GM10248 (cell line): ENCODE measurements at regions of chr4 and their contacts with region 1.

Region 1: DNA sequence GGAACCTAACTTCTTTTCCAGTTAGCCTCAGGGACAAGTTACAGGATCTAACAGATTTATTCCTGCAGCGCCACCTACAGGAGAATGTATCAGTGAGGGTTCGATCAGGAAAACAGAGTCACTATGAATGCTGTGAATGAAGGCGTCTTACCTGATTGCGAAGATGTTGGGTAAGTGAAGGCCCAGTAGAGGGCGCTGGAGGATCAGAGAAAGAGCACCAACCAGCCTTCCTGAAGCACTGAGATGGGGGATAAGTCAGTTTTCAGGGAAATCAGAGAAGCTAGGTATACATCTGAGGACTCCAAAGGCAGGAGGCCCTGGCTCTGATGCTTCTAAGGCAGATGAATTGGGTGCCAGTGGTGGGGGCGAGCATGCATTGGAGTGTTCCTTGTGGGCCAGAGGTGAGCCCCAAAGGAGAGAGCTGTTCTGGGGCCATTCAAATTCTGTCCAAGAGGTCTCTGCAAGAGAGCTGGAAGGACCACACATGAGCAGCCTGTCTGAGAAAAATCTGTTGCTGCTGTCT is 169.9 kb upstream of the AADAT start:
- DNase-seq: peak; percentile 58
- CTCF ChIP-seq: peak; percentile 83

Region 2: DNA sequence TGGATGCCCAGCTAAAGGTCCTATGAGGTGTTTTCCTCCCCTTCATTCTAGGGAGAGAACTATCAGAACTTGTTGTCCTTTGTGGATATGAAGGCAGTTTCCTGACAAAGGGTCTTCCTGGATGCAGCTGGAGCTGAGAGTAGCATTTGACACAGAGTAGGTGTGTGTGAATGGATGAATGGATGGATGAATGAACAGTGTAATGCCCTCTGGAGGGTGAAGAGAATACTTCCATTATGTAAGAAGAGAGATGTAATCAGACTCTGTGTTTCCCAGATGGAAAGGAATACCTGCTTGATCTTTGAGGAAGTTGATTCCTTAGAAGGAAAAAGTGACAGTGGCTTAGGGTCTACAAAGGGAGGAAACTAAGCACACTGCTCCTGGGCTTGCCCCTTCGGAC is 114.6 kb before region 1 on chr4:
- CTCF ChIA-PET with region 1: interaction called, 10 read pairs
- POLR2A ChIA-PET with region 1: no interaction called
- DNase-seq: no peak
- CTCF ChIP-seq: no peak

Region 3: GRCh38 chr4:170242471-170242870 is 17.2 kb before region 1 on chr4:
- CTCF ChIA-PET with region 1: interaction called, 78 read pairs
- POLR2A ChIA-PET with region 1: no interaction called
- DNase-seq: no peak
- CTCF ChIP-seq: no peak

Region 4: DNA sequence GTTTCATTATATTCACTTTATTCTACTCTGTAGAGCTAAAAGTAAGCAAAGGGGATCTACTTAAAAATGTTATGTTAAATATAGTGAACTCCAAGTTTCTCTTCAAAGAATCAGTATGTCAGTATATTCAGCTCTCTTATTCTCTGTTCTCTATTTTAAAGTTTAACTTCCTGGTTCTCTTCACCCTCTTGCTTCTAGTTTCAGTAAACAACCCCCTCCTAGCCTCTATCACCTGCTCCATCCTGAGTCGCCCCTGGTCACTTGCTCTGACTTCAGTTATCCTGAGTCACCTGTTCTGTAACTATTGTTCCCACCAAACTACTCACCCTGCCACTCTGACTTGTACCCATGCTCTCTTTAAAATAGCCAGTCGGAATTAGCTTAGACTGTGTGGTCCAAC is 10.9 kb after region 1 on chr4:
- CTCF ChIA-PET with region 1: interaction called, 117 read pairs
- POLR2A ChIA-PET with region 1: no interaction called
- DNase-seq: no peak
- CTCF ChIP-seq: no peak

Region 5: GRCh38 chr4:170307182-170307581 is 47.5 kb after region 1 on chr4:
- CTCF ChIA-PET with region 1: interaction called, 10 read pairs
- POLR2A ChIA-PET with region 1: no interaction called
- DNase-seq: no peak
- CTCF ChIP-seq: no peak

Region 6: DNA sequence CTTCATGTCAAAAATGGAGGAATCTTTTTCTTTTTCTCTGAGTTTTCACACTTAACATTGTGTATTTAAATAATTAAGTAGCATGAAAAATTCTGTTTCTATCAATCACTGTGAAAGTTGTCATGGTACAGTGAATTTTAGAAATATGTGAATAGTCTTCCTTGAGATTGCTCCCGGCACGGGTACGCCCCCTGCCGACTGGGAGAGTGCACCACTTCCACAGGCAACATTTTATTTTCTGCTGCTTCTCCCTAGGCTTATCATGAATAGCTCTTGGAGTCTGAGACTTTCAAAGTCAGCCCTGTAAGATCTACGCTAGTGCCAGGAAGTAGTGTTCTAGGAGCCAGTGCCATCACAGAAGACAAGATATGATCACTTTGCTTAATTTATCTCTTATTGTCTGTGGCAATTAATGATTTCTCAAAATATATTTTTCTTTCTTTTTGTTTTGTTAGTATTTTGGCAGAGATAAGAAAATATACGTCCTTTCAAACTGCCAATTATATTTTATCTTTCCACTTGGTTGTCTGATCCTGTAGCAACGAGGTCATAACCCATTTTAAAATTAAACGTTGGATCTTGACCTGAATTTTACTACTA is 593.8 kb after region 1 on chr4:
- CTCF ChIA-PET with region 1: interaction called, 66 read pairs
- POLR2A ChIA-PET with region 1: no interaction called
- DNase-seq: peak; percentile 39
- CTCF ChIP-seq: peak; percentile 80